ENCODE measurements at regions of chr15 and their contacts with region 1.

Region 1: GRCh38 chr15:67836477-67836876 is 3.4 kb downstream of the RNU6-1 start:
- DNase-seq: peak; percentile 69
- H3K4me3 Mint-ChIP-seq: peak overlapping the region; percentile 63
- H3K27ac Mint-ChIP-seq: peak overlapping the region; percentile 7
- H3K4me1 Mint-ChIP-seq: peaks cover 62% of the 10 kb centered on the region
- H3K27me3 Mint-ChIP-seq: peaks cover 84% of the 10 kb centered on the region

Region 2: GRCh38 chr15:67456677-67457529 is 379.6 kb before region 1 on chr15:
- CTCF ChIA-PET with region 1: interaction called, 35 read pairs
- DNase-seq: peak; percentile 87
- H3K4me3 Mint-ChIP-seq: no peak overlapping the region
- H3K27ac Mint-ChIP-seq: no peak overlapping the region
- H3K4me1 Mint-ChIP-seq: no peaks in the 10 kb centered on the region
- H3K27me3 Mint-ChIP-seq: peaks cover 12% of the 10 kb centered on the region

Region 3: DNA sequence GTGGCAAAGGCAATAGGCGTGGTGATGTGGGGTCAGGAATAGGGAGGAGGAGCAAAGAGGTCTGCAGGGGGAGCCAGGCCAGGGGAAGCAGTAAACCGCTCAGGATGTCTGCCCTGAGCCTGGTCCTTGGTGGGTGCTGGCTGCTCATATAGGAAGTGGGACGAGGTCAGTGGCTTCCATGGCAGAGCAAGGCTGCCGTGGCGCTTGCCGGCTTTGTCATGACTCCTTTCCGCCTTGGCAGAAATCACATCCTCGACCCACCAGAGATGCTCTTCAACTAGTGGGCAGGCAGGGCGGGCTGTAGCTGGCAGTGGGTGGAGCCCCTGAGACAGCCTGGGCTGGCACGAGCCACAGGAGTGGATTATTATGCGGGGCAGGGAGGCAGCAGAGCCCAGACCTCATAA is 24.2 kb before region 1 on chr15:
- CTCF ChIA-PET with region 1: no interaction called
- DNase-seq: no peak
- H3K4me3 Mint-ChIP-seq: no peak overlapping the region
- H3K27ac Mint-ChIP-seq: no peak overlapping the region
- H3K4me1 Mint-ChIP-seq: peaks cover 4% of the 10 kb centered on the region
- H3K27me3 Mint-ChIP-seq: peaks cover 37% of the 10 kb centered on the region

Region 4: GRCh38 chr15:67824976-67825879 is 11.2 kb before region 1 on chr15 and contains the start of gene SKOR1:
- CTCF ChIA-PET with region 1: interaction called, 11 read pairs
- DNase-seq: peak; percentile 54
- H3K4me3 Mint-ChIP-seq: peak within 1 kb of the TSS; percentile 58
- H3K27ac Mint-ChIP-seq: peak within 1 kb of the TSS; percentile 85
- H3K4me1 Mint-ChIP-seq: peaks cover 48% of the 10 kb centered on the region
- H3K27me3 Mint-ChIP-seq: peaks cover 98% of the 10 kb centered on the region